GM12878 (cell line): ENCODE measurements at regions of chr7 and their contacts with region 1.

Region 1: GRCh38 chr7:50206453-50207250 is 97.9 kb upstream of the IKZF1 start:
- DNase-seq: no peak
- ATAC-seq: no peak
- H3K4me3 ChIP-seq: no peak overlapping the region
- H3K27ac ChIP-seq: no peak overlapping the region
- H3K4me1 ChIP-seq: no peaks in the 10 kb centered on the region
- H3K27me3 ChIP-seq: no peaks in the 10 kb centered on the region
- CTCF ChIP-seq: no peak
- EP300 ChIP-seq: no peak
- POLR2A ChIP-seq: no peak
- RAD21 ChIP-seq: no peak

Region 2: DNA sequence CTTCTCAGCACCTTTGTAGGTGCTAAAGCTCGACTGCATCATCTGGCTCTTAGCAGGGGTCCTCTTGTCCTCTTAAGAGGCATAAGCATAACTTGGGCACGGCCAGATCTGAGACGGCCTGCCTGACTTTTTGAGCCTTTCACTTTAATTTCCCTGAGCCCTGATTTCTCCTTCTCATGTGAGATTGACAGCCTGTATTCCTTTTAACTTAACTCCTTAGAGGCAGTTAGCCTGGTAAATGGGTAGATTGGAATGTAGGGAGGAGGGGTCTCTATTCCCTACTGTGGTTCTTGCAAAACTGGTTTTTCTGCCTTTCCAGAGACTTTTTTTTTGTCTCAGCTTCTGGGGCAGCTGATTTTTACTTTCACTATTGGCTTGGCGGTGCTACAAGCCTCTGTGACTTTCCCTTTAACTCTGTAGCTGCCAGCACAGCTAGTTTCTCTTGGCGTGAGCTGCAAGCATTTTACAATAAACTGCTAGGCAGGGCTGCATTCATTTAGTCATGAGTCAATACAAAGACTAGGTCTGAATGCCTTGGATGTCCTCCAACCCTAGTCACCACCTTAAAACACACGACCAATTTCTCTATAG is 137.6 kb before region 1 on chr7:
- CTCF ChIA-PET with region 1: no interaction called
- POLR2A ChIA-PET with region 1: no interaction called
- RAD21 ChIA-PET with region 1: no interaction called
- SMC1A ChIA-PET with region 1: no interaction called
- in situ Hi-C with region 1: no loop called
- intact Hi-C with region 1: no loop called
- DNase-seq: peak; percentile 9
- ATAC-seq: peak; percentile 84
- H3K4me3 ChIP-seq: peak overlapping the region; percentile 45; the same call in 1 of the 2 replicates
- H3K27ac ChIP-seq: no peak overlapping the region
- H3K4me1 ChIP-seq: peaks cover 5% of the 10 kb centered on the region
- H3K27me3 ChIP-seq: no peaks in the 10 kb centered on the region
- CTCF ChIP-seq: no peak
- EP300 ChIP-seq: no peak
- POLR2A ChIP-seq: no peak
- RAD21 ChIP-seq: no peak

Region 3: GRCh38 chr7:50142425-50143017 is 64.1 kb before region 1 on chr7:
- CTCF ChIA-PET with region 1: interaction called, 151 read pairs
- POLR2A ChIA-PET with region 1: interaction called, 3 read pairs
- RAD21 ChIA-PET with region 1: interaction called, 135 read pairs
- SMC1A ChIA-PET with region 1: interaction called, 160 read pairs
- in situ Hi-C with region 1: no loop called
- intact Hi-C with region 1: loop called (anchors 1 kb)
- DNase-seq: peak; percentile 24
- ATAC-seq: peak; percentile 51
- H3K4me3 ChIP-seq: no peak overlapping the region
- H3K27ac ChIP-seq: no peak overlapping the region
- H3K4me1 ChIP-seq: peaks cover 24% of the 10 kb centered on the region
- H3K27me3 ChIP-seq: no peaks in the 10 kb centered on the region; a peak in 1 of 4 replicates
- CTCF ChIP-seq: peak; percentile 55 to 61 (median 60)
- EP300 ChIP-seq: no peak
- POLR2A ChIP-seq: no peak
- RAD21 ChIP-seq: peak; percentile 85

Region 4: DNA sequence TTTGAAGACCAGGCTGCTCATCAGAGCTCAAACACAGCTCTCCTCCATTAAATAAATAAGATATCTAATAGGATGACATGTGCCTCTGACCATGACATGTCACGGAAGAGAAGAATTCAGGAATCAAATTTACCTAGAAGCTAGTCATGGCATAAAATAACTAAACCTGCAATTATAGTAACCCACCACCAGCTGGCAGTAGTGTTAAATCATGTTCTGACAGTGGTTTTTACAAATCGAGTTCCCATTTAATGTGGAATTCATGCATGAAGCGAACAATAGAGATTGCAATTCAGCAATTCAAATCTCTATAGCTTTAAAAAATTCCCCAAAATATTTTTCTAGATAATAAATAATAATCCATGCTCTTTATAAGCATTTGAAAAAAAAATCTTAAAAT is 23.3 kb after region 1 on chr7:
- CTCF ChIA-PET with region 1: interaction called, 18 read pairs
- POLR2A ChIA-PET with region 1: no interaction called
- RAD21 ChIA-PET with region 1: interaction called, 3 read pairs
- SMC1A ChIA-PET with region 1: interaction called, 14 read pairs
- in situ Hi-C with region 1: no loop called
- intact Hi-C with region 1: no loop called
- DNase-seq: no peak
- ATAC-seq: no peak
- H3K4me3 ChIP-seq: no peak overlapping the region
- H3K27ac ChIP-seq: no peak overlapping the region
- H3K4me1 ChIP-seq: no peaks in the 10 kb centered on the region
- H3K27me3 ChIP-seq: no peaks in the 10 kb centered on the region
- CTCF ChIP-seq: peak; percentile 21 to 58 (median 46); a peak in 5 of 6 replicates
- EP300 ChIP-seq: no peak
- POLR2A ChIP-seq: no peak
- RAD21 ChIP-seq: peak; percentile 58

Region 5: DNA sequence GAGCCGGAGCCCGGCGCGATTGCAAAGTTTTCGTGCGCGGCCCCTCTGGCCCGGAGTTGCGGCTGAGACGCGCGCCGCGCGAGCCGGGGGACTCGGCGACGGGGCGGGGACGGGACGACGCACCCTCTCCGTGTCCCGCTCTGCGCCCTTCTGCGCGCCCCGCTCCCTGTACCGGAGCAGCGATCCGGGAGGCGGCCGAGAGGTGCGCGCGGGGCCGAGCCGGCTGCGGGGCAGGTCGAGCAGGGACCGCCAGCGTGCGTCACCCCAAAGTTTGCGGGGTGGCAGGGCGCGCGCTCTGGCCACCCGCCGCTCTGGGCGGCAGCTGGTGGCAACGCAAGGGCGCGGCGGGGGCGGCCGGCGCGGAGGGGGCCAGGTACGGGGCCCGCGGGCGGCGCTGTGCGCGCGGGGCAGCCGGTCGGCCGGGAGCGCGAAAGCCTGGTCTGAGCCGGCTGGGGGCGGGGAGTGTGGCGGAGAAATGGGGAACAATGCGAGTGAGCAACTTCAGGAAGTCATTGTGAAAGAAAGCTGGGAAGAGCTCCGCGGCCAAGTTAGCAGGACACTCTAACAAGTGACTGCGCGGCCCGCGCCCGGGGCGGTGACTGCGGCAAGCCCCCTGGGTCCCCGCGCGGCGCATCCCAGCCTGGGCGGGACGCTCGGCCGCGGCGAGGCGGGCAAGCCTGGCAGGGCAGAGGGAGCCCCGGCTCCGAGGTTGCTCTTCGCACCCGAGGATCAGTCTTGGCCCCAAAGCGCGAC is 97.7 kb after region 1 on chr7 and contains the start of gene IKZF1:
- CTCF ChIA-PET with region 1: interaction called, 23 read pairs
- POLR2A ChIA-PET with region 1: no interaction called
- RAD21 ChIA-PET with region 1: interaction called, 19 read pairs
- SMC1A ChIA-PET with region 1: interaction called, 25 read pairs
- in situ Hi-C with region 1: no loop called
- intact Hi-C with region 1: loop called (anchors 2 kb)
- DNase-seq: no peak
- ATAC-seq: peak; percentile 41
- H3K4me3 ChIP-seq: peak within 1 kb of the TSS; percentile 79
- H3K27ac ChIP-seq: peak within 1 kb of the TSS; percentile 67
- H3K4me1 ChIP-seq: peaks cover 10% of the 10 kb centered on the region
- H3K27me3 ChIP-seq: no peaks in the 10 kb centered on the region
- CTCF ChIP-seq: no peak; a peak in 1 of 6 replicates
- EP300 ChIP-seq: no peak
- POLR2A ChIP-seq: peak; percentile 33
- RAD21 ChIP-seq: no peak
- polyA plus RNA-seq, gene IKZF1: 27.2 to 29.8 TPM

Region 6: DNA sequence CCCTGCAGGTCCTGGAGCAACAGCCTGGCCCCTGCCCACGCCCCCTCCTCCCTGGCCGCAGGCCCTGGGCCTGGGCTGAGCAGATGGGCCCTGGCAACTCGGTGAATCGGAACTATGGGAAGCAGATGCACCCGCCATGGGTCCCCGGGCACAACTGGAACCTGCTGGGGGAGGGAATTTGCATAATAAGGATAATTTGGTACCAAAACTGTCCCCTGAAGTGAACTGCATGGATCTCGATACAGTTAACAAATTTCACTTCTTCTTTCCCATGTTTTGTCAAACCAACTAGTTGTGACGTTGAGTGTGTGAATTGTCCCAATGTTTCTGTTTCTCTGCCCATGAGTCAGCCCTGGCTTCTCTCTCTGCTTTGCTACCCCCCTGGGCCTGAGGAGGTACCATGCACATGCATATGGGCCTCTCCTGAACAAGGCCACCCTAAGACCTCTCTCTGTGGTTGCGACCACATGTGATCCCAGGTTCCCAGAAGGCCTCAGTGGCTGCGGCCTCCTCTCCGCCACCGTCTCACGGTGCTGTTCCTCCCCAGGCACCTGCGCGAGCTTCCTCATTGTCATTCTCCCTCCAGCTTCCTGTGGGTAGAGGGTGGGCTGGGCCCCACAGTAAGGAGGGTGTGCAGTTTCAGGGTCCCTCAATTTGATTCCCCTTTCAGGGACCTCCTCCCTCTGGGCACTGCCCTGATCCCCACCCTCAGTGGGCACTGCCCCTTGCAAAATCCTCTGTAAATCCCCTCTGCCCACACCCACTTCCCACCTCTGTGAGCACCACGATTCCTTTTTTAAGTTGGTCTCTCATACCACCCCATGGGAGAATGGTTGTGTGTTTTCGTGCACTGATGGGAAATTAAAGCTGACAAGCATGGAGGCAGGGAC is 203.4 kb after region 1 on chr7:
- CTCF ChIA-PET with region 1: interaction called, 257 read pairs
- POLR2A ChIA-PET with region 1: no interaction called
- RAD21 ChIA-PET with region 1: interaction called, 77 read pairs
- SMC1A ChIA-PET with region 1: interaction called, 122 read pairs
- in situ Hi-C with region 1: loop called (anchors 10 kb)
- intact Hi-C with region 1: no loop called
- DNase-seq: peak; percentile 94
- ATAC-seq: peak; percentile 72
- H3K4me3 ChIP-seq: no peak overlapping the region
- H3K27ac ChIP-seq: peak overlapping the region; percentile 54
- H3K4me1 ChIP-seq: peaks cover 71% of the 10 kb centered on the region
- H3K27me3 ChIP-seq: no peaks in the 10 kb centered on the region
- CTCF ChIP-seq: no peak
- EP300 ChIP-seq: peak; percentile 32 to 54; a peak in 1 of 4 replicates
- POLR2A ChIP-seq: peak; percentile 49; the same call in 1 of the 2 replicates
- RAD21 ChIP-seq: no peak

Region 7: GRCh38 chr7:51154201-51154600 is 947.5 kb after region 1 on chr7:
- CTCF ChIA-PET with region 1: no interaction called
- POLR2A ChIA-PET with region 1: no interaction called
- RAD21 ChIA-PET with region 1: no interaction called
- SMC1A ChIA-PET with region 1: no interaction called
- in situ Hi-C with region 1: loop called (anchors 10 kb)
- intact Hi-C with region 1: no loop called
- DNase-seq: no peak
- ATAC-seq: no peak
- H3K4me3 ChIP-seq: no peak overlapping the region
- H3K27ac ChIP-seq: no peak overlapping the region
- H3K4me1 ChIP-seq: no peaks in the 10 kb centered on the region
- H3K27me3 ChIP-seq: peaks cover 0 to 3% of the 10 kb centered on the region in 2 experiments; a peak in 2 of 4 replicates
- CTCF ChIP-seq: no peak
- EP300 ChIP-seq: no peak
- POLR2A ChIP-seq: no peak
- RAD21 ChIP-seq: no peak